Right cardiac atrium (tissue), 5 donors: ENCODE measurements at regions of chr12 and their contacts with region 1.

Region 1: GRCh38 chr12:22856178-22856577 is 231.2 kb downstream of the ETNK1 start:
- DNase-seq: no peak
- ATAC-seq: no peak
- H3K4me3 ChIP-seq: no peak overlapping the region
- H3K27ac ChIP-seq: no peak overlapping the region
- H3K4me1 ChIP-seq: no peaks in the 10 kb centered on the region
- H3K27me3 ChIP-seq: no peaks in the 10 kb centered on the region

Region 2: GRCh38 chr12:22821985-22822384 is 34.2 kb before region 1 on chr12:
- intact Hi-C with region 1: no loop called
- DNase-seq: no peak
- ATAC-seq: no peak
- H3K4me3 ChIP-seq: no peak overlapping the region
- H3K27ac ChIP-seq: no peak overlapping the region
- H3K4me1 ChIP-seq: no peaks in the 10 kb centered on the region
- H3K27me3 ChIP-seq: no peaks in the 10 kb centered on the region

Region 3: DNA sequence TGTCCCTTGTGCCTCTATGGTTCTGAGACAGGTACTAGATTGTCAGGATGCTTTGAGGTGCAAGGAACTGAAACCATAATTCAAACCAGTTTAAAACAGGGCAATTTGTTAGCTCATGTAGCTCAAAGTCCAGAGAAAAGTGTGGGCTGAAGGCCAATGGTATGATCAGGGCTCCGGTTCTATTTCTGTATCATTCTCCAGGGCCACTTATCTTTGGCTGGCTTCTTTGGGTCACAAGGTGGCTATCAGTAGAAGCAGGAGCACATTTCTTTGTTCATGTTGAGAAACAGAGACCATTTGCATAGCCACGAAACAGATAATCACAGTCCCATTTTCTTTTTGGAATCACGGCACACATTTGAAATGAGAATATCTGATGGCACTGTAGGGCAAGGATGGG is 63.7 kb after region 1 on chr12:
- intact Hi-C with region 1: no loop called
- DNase-seq: no peak
- ATAC-seq: no peak
- H3K4me3 ChIP-seq: no peak overlapping the region
- H3K27ac ChIP-seq: no peak overlapping the region
- H3K4me1 ChIP-seq: peaks cover 3% of the 10 kb centered on the region
- H3K27me3 ChIP-seq: no peaks in the 10 kb centered on the region

Region 4: DNA sequence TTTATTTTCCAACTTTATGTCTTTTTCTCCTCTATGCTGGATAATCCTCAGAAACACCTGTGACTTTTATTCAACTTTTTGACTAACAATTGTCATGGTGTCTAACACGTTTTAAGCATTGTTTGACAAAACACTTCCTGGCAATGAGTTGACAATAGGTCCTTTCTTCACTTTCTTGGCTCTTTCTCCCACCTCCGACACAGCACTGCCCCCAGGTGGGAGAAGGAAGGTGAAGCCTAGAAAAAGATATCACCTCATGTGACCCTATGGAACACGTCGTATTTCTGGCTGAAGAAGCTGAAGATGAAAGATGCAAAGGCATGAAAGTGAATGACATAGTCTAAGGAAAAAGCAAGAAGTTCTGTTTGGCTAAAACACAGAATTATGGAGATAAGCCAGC is 198.8 kb after region 1 on chr12:
- intact Hi-C with region 1: loop called in 1 of 4 experiments (anchors 10 kb)
- DNase-seq: no peak
- ATAC-seq: peak in 1 of 2 donors; percentile 46
- H3K4me3 ChIP-seq: no peak overlapping the region
- H3K27ac ChIP-seq: no peak overlapping the region
- H3K4me1 ChIP-seq: no peaks in the 10 kb centered on the region
- H3K27me3 ChIP-seq: no peaks in the 10 kb centered on the region